IMR-90 (cell line): ENCODE measurements at regions of chr9 and their contacts with region 1.

Region 1: GRCh38 chr9:74742792-74743730 is 144.7 kb downstream of the TRPM6 start:
- DNase-seq: peak; percentile 24
- ATAC-seq: peak; percentile 73
- H3K4me3 ChIP-seq: no peak overlapping the region
- H3K27ac ChIP-seq: no peak overlapping the region
- H3K4me1 ChIP-seq: no peaks in the 10 kb centered on the region
- H3K27me3 ChIP-seq: peaks cover 1% of the 10 kb centered on the region
- CTCF ChIP-seq: peak; percentile 72
- POLR2A ChIP-seq: no peak
- RAD21 ChIP-seq: peak; percentile 65

Region 2: DNA sequence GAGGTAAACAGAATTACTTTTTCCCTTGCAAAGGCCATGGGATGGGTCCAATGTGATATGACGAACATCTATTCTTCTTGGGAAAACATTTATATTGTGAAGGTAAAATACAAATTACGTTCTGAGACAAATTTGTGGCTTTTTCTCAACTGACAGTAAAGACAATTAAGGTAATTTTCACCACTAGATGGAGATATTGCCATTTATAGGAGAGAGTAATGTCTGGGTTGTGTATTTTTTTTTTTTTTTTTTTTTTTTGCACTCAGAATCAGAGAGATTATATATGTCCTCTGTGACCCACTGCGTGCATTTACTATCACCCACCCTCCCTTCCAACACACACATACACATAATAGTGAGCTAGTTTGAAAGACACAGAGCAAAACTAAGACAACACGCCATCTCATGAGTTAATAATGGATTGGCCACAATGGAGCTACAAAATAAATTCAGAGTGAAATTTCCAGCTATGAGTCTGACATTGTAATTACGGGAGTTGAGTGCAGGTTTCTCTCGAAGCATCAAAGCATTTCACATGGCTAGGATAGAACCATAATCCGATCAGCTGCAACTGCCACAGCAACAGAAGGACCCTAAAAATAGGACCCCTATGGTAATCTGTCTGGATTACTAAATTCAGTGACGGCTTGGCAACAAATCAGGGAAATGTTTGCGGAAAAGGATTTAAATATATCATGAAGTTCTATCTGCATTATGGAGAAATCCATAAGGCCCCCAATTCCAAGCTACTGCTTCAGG is 1542.2 kb before region 1 on chr9:
- CTCF ChIA-PET with region 1: no interaction called
- POLR2A ChIA-PET with region 1: no interaction called
- dilution Hi-C with region 1: no loop called
- in situ Hi-C with region 1: no loop called
- intact Hi-C with region 1: loop called (anchors 2 kb)
- DNase-seq: peak; percentile 23
- ATAC-seq: peak; percentile 29; the same call in 1 of the 2 replicates
- H3K4me3 ChIP-seq: no peak overlapping the region
- H3K27ac ChIP-seq: no peak overlapping the region
- H3K4me1 ChIP-seq: no peaks in the 10 kb centered on the region
- H3K27me3 ChIP-seq: no peaks in the 10 kb centered on the region
- CTCF ChIP-seq: peak; percentile 64
- POLR2A ChIP-seq: no peak
- RAD21 ChIP-seq: peak; percentile 63

Region 3: GRCh38 chr9:74577956-74578355 is 165.1 kb before region 1 on chr9:
- CTCF ChIA-PET with region 1: interaction called, 3 read pairs
- POLR2A ChIA-PET with region 1: no interaction called
- dilution Hi-C with region 1: no loop called
- in situ Hi-C with region 1: no loop called
- intact Hi-C with region 1: loop called (anchors 1 kb)
- DNase-seq: peak; percentile 3
- ATAC-seq: peak; percentile 44; the same call in 1 of the 2 replicates
- H3K4me3 ChIP-seq: no peak overlapping the region
- H3K27ac ChIP-seq: no peak overlapping the region
- H3K4me1 ChIP-seq: no peaks in the 10 kb centered on the region
- H3K27me3 ChIP-seq: no peaks in the 10 kb centered on the region
- CTCF ChIP-seq: peak; percentile 51
- POLR2A ChIP-seq: no peak
- RAD21 ChIP-seq: peak; percentile 17; the same call in 1 of the 2 replicates

Region 4: GRCh38 chr9:74645007-74645639 is 97.9 kb before region 1 on chr9:
- CTCF ChIA-PET with region 1: no interaction called
- POLR2A ChIA-PET with region 1: no interaction called
- dilution Hi-C with region 1: no loop called
- in situ Hi-C with region 1: no loop called
- intact Hi-C with region 1: loop called (anchors 5 kb)
- DNase-seq: no peak
- ATAC-seq: peak; percentile 53; the same call in 1 of the 2 replicates
- H3K4me3 ChIP-seq: no peak overlapping the region
- H3K27ac ChIP-seq: no peak overlapping the region
- H3K4me1 ChIP-seq: no peaks in the 10 kb centered on the region
- H3K27me3 ChIP-seq: no peaks in the 10 kb centered on the region
- CTCF ChIP-seq: peak; percentile 45
- POLR2A ChIP-seq: no peak
- RAD21 ChIP-seq: no peak